Astrocyte of the cerebellum (primary cell): ENCODE measurements at regions of chr2 and their contacts with region 1.

Region 1: DNA sequence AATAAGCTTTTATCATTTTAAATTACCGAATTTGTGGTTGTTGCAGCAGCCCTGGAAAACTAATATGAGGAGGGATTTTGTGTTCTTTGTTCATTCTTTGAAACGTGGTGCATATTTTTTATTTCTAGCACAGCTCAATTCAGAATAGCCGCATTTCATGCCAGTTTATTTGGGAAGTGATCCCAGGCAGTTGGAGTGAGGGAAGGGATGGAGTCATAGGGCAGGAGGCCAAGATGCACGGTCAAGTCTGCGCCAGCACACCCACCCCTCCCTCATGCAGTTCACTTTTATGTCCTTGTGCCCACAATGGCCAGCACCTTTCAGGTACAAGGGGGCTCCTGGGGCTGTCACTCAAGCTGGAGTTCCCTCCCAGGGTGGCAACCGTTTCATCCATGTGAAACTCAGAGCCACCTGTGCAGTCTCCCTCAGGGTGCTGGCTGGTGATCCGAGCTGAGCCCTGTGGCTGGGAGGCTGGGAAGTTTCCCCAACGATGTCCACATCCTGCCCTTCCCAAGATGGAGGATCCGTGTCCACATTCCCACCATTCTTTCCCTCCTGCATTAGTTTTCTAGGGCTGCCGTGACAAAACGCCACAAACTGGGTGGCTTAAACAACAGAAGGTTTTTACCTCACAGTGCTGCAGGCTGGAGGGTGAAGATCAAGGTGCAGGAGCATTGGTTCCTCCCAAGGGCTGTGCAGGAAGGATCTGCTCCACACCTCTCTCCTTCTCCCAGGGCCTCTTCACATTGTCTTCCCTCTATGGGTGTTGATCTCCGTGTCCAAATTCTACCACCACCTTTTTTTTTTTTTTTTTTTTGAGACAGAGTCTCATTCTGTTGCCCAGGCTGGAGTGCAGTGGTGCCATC is 68.5 kb upstream of the ITGA6 start:
- DNase-seq: peak; percentile 8
- H3K4me3 ChIP-seq: no peak overlapping the region
- CTCF ChIP-seq: no peak

Region 2: DNA sequence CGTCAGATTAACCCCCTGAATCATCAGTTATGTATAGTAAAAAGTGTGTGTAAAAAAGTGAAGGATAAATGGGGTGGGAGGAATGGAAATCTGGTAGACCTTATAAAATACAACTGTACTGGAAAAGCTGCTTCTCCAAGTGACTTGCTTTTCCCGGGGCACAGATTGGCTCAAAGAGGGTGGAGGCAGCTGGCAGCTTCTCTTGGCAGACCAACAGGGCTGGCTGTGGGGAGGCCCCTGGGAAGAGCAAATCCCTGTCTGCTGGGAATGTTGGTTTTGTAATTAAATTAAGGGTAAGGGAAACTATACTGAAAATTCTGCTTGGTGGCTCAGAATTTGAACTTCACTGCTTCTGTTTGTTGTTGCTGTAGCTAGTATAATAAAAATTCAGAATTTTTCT is 102.0 kb before region 1 on chr2:
- in situ Hi-C with region 1: loop called (anchors 5 kb)
- DNase-seq: no peak
- H3K4me3 ChIP-seq: no peak overlapping the region
- CTCF ChIP-seq: no peak

Region 3: GRCh38 chr2:172408143-172408766 is 49.3 kb after region 1 on chr2:
- in situ Hi-C with region 1: no loop called
- DNase-seq: no peak
- H3K4me3 ChIP-seq: no peak overlapping the region
- CTCF ChIP-seq: no peak